ENCODE measurements at regions of chr2 and their contacts with region 1.

Region 1: DNA sequence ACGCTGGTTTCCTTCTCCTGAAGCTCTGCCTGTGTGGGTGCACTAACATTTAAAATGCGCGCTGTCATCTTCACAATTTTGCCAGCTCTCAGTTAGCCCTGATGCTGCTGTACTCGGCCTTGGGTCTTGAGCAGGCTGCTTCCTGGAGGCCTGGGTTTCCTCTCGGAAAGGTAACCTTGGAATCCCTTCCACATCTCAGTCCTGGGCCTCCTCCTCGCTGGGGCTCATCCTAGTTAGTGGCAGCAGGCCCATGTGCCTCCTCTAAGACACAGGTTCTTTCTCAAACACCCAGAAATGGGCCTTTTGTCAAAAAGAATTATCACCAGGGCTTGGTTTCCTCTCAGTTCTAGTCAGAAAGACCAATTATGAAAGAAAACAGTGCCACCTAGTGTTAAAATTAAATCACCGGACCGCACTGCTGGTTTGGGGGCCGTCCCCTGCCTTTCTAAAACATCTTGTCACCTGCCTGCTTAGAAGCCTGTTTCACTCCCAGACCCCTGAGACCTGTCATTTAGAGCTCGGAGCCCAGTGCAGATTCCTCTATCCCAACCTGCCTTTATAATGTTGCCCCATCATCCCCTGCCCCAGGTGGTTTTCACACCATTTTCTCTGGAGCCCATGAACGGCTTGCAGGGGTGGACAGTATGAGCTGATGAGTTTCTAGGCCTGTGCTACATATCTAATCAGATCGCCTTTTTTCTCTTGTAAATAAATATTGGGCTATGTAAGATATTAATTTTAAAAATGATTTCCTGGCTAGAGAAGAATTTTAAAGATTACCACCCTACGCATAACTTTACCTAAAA is 42.4 kb downstream of the HK2 start:
- DNase-seq: no peak
- H3K4me3 ChIP-seq: no peak overlapping the region
- H3K27ac ChIP-seq: peak overlapping the region; percentile 37 to 55 (median 48)
- H3K4me1 ChIP-seq: peaks cover 4 to 24% (median 19%) of the 10 kb centered on the region in 4 donors
- H3K27me3 ChIP-seq: no peaks in the 10 kb centered on the region
- CTCF ChIP-seq: peak; percentile 71 to 79 (median 75)
- EP300 ChIP-seq: no peak
- POLR2A ChIP-seq: no peak

Region 2: GRCh38 chr2:74507145-74507925 is 368.9 kb before region 1 on chr2 and contains the start of gene PCGF1:
- intact Hi-C with region 1: no loop called
- DNase-seq: peak; percentile 100
- H3K4me3 ChIP-seq: peak within 1 kb of the TSS; percentile 71 to 99 (median 86)
- H3K27ac ChIP-seq: peak within 1 kb of the TSS; percentile 92 to 99 (median 99)
- H3K4me1 ChIP-seq: peaks cover 34 to 55% (median 50%) of the 10 kb centered on the region in 4 donors
- H3K27me3 ChIP-seq: peaks cover 0 to 75% (median 23%) of the 10 kb centered on the region in 4 donors
- CTCF ChIP-seq: peak in 2 of 3 experiments; percentile 29 to 30
- EP300 ChIP-seq: no peak
- POLR2A ChIP-seq: no peak
- total RNA-seq, gene PCGF1: 11.3 to 14.1 (median 12.7) TPM

Region 3: GRCh38 chr2:74715078-74715791 is 161.0 kb before region 1 on chr2:
- intact Hi-C with region 1: loop called (anchors 1 kb)
- DNase-seq: peak; percentile 96
- H3K4me3 ChIP-seq: peak overlapping the region; percentile 55 to 65 (median 57)
- H3K27ac ChIP-seq: peak overlapping the region; percentile 34 to 77 (median 72)
- H3K4me1 ChIP-seq: peaks cover 5 to 14% (median 12%) of the 10 kb centered on the region in 4 donors
- H3K27me3 ChIP-seq: peaks cover 0 to 19% (median 0%) of the 10 kb centered on the region in 4 donors
- CTCF ChIP-seq: peak; percentile 80 to 92 (median 91)
- EP300 ChIP-seq: no peak
- POLR2A ChIP-seq: no peak

Region 4: DNA sequence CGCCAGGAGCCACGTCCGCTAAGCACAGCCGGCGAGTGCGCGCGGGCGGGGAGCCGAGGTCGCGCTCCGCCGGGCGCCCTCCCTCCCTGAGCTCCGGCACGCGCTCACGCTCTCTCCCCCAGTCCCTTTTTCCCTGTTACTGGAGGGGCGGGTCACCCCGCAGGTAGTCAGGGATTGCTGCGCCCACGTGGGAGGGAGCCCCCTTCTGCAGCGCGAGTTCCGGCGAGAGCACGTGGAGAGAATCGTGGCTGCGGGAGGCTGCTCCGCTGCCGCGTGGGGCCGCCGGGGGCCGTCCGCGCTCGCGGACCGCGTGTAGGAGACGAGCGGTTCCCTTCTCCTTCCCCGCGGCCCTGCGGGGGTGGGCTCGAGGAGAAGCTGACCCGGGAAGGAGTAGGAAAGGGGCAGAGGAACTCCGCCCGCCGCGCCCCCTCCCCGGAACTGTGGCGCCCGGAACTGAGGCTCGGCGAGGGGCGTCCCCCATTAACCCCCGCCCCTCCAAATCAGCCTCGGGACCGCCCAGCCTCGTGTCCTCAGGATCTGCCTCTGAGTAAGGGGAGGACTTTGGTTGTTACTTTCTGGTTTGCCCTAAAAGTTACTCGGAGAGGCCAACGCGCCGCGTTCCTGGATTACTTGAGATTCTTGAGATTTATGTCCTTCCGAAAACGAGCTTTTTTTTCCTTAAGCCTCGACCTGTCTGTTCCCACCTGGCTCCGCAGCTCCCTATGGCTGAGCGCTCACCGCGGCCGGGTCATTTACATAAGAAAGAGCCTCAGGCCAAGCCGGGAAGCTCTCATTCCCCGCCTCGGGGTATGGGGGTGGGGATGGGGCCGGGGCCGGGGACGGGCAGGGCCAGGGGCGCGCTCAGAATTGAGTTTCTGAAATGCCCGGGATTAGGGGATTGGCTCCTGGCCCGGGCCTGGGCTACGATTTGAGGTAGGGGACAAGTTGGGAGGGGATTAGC is 41.2 kb before region 1 on chr2:
- intact Hi-C with region 1: loop called (anchors 5 kb)
- DNase-seq: no peak
- H3K4me3 ChIP-seq: peak overlapping the region; percentile 59 to 73 (median 60)
- H3K27ac ChIP-seq: peak overlapping the region; percentile 63 to 82 (median 71)
- H3K4me1 ChIP-seq: peaks cover 13 to 40% (median 37%) of the 10 kb centered on the region in 4 donors
- H3K27me3 ChIP-seq: peaks cover 0 to 10% (median 0%) of the 10 kb centered on the region in 4 donors
- CTCF ChIP-seq: no peak
- EP300 ChIP-seq: no peak
- POLR2A ChIP-seq: no peak